Vagina (tissue), 2 donors: ENCODE measurements at regions of chr9 and their contacts with region 1.

Region 1: DNA sequence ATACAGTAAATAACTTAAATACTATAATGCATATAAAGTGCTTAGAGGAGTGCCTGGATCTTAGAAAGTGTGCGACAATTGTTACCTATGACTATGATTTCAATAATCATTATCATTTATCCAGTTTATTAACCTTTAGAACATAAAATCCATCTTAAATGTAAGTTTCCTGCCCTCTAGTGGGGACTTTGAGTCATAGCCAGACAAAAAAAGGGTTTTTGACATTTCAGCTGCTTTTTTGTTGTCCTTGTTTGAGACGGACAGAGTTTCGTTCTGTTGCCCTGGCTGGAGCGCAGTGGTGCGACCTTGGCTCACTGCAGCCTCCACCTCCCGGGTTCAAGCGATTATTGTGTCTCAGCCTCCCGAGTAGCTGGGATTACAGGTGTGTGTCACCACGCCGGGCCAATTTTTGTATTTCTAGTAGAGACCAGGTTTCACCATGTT is 9.7 kb upstream of the C9orf152 start:
- DNase-seq: no peak
- H3K4me3 ChIP-seq: no peak overlapping the region
- H3K27ac ChIP-seq: no peak overlapping the region
- H3K4me1 ChIP-seq: no peaks in the 10 kb centered on the region
- H3K27me3 ChIP-seq: no peaks in the 10 kb centered on the region
- CTCF ChIP-seq: peak; percentile 68 to 79 (median 73)
- POLR2A ChIP-seq: no peak

Region 2: GRCh38 chr9:109574068-109574882 is 643.4 kb before region 1 on chr9:
- intact Hi-C with region 1: loop called (anchors 10 kb)
- DNase-seq: no peak
- H3K4me3 ChIP-seq: no peak overlapping the region
- H3K27ac ChIP-seq: no peak overlapping the region
- H3K4me1 ChIP-seq: no peaks in the 10 kb centered on the region
- H3K27me3 ChIP-seq: no peaks in the 10 kb centered on the region
- CTCF ChIP-seq: peak; percentile 39 to 56 (median 50)
- POLR2A ChIP-seq: no peak

Region 3: DNA sequence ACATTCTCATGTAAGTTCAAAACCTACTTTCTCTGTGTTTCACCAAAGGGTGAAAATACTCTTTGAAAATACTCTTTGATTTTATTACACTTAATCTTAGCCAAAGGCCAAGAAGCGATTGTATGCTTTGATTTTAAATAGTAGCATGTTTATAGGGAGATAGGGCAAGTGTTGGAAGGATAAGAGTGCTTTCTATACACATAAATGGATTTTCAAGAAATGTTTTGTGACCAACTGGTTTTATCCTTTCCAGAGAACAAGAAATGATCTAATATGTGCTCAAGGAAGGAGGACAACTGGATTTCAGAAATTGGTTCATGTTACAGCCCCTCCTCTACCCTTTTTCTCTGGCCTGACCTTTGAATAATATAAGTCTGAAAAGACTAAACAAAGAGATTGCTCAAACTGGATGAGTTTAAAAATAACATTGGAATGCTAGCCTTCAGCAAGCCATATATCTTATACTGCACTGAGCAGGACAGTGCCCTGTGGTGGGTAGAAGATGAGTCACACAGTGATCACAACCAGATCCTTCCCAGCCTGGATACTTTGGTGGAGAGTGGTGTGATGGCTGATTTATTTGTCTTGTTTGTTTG is 424.6 kb before region 1 on chr9:
- intact Hi-C with region 1: no loop called
- DNase-seq: no peak
- H3K4me3 ChIP-seq: no peak overlapping the region
- H3K27ac ChIP-seq: peak overlapping the region; percentile 49
- H3K4me1 ChIP-seq: peaks cover 24% of the 10 kb centered on the region
- H3K27me3 ChIP-seq: no peaks in the 10 kb centered on the region
- CTCF ChIP-seq: no peak
- POLR2A ChIP-seq: no peak